Transverse colon (tissue), 4 donors: ENCODE measurements at regions of chr2 and their contacts with region 1.

Region 1: GRCh38 chr2:26970244-26970920 is at the start of gene MAPRE3:
- DNase-seq: peak; percentile 86
- H3K4me3 ChIP-seq: peak within 1 kb of the TSS; percentile 68 to 89 (median 78)
- H3K27ac ChIP-seq: peak within 1 kb of the TSS; percentile 73 to 86 (median 85)
- H3K4me1 ChIP-seq: peaks cover 5 to 45% (median 26%) of the 10 kb centered on the region in 4 donors
- H3K27me3 ChIP-seq: no peaks in the 10 kb centered on the region
- CTCF ChIP-seq: no peak
- EP300 ChIP-seq: no peak
- POLR2A ChIP-seq: no peak
- total RNA-seq, gene MAPRE3: 16.8 to 64.7 (median 32.9) TPM

Region 2: GRCh38 chr2:26692279-26692896 is 278.0 kb before region 1 on chr2 and contains the start of gene KCNK3:
- in situ Hi-C with region 1: no loop called
- intact Hi-C with region 1: no loop called
- DNase-seq: peak; percentile 43
- H3K4me3 ChIP-seq: peak within 1 kb of the TSS; percentile 3 to 45 (median 24)
- H3K27ac ChIP-seq: peak within 1 kb of the TSS; percentile 76 to 88 (median 76)
- H3K4me1 ChIP-seq: peaks cover 10 to 28% (median 18%) of the 10 kb centered on the region in 4 donors
- H3K27me3 ChIP-seq: peaks cover 59% of the 10 kb centered on the region
- CTCF ChIP-seq: no peak
- EP300 ChIP-seq: no peak
- POLR2A ChIP-seq: no peak
- total RNA-seq, gene KCNK3: 0.37 to 1.5 (median 0.82) TPM

Region 3: DNA sequence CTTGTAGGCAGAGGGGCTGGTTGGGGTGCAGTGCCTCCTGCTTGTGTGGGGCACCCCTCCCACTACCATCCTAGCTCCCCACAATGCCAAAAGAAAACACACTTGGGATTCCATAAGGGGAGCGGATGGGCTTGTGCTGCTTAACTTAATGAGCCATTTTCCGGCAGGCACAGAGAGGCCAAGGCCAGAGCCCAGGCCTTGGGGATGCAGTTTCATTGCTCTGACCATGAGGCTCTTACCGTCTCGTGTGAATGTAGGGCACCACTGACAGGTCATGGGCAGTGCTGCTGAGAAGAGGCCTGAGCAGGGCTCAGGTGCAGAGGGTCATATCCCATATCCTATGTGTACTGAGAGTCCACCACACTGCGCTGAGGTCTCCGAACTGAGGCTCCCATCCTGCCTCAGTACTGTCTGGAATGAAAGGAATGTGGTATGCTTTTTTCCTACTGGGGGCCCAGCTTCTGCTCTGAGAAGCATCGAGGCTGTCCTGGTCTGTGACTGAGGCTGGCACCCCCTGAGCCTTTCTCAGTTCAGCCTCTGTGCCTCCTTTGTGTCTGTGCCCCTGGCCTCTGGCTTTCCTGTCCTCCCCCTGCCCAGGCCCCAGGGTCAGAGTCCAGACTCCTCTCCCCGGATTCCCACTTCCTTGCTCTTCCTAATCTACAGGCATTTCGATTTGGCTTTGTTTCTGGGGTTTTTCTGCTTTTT is 45.1 kb before region 1 on chr2:
- in situ Hi-C with region 1: no loop called
- intact Hi-C with region 1: no loop called
- DNase-seq: no peak
- H3K4me3 ChIP-seq: no peak overlapping the region
- H3K27ac ChIP-seq: no peak overlapping the region
- H3K4me1 ChIP-seq: no peaks in the 10 kb centered on the region
- H3K27me3 ChIP-seq: peaks cover 17% of the 10 kb centered on the region
- CTCF ChIP-seq: no peak
- EP300 ChIP-seq: no peak
- POLR2A ChIP-seq: no peak

Region 4: DNA sequence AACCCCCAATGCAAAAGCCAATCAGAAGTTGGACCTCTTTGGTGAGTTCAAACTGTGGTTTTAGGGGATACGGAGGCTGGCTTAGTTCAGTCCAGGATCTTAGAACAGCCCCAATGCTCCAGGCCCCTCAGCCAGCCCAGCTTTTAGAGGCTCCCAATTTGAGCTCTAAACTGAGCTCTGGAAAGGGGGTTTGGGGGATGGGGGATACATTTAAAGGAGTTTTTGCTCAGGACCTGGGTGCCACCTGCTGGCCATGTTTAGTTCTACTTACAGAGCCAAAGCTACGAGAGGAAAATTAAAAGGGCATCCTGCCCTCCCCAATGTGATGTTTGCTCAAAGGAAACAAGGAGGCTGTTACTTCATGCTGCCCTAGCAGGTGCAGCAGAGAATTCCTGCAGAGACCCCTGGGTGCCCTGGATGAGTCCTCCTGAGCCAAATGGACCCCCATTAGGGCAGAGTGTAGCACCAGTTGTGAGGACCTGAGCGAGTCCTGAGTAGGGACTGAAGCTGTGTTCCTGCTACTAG is 46.5 kb after region 1 on chr2:
- in situ Hi-C with region 1: loop called (anchors 5 to 10 kb)
- intact Hi-C with region 1: no loop called
- DNase-seq: peak; percentile 66
- H3K4me3 ChIP-seq: no peak overlapping the region
- H3K27ac ChIP-seq: peak overlapping the region in 3 of 4 donors; percentile 55 to 73 (median 60)
- H3K4me1 ChIP-seq: peaks cover 19 to 46% (median 41%) of the 10 kb centered on the region in 4 donors
- H3K27me3 ChIP-seq: no peaks in the 10 kb centered on the region
- CTCF ChIP-seq: peak; percentile 63 to 81 (median 66)
- EP300 ChIP-seq: no peak
- POLR2A ChIP-seq: no peak

Region 5: GRCh38 chr2:27086090-27086723 is 115.8 kb after region 1 on chr2:
- in situ Hi-C with region 1: loop called (anchors 10 to 25 kb)
- intact Hi-C with region 1: no loop called
- DNase-seq: peak; percentile 97
- H3K4me3 ChIP-seq: peak overlapping the region; percentile 35 to 72 (median 52)
- H3K27ac ChIP-seq: peak overlapping the region; percentile 92 to 94 (median 92)
- H3K4me1 ChIP-seq: peaks cover 25 to 51% (median 35%) of the 10 kb centered on the region in 4 donors
- H3K27me3 ChIP-seq: no peaks in the 10 kb centered on the region
- CTCF ChIP-seq: peak; percentile 52 to 95 (median 89)
- EP300 ChIP-seq: no peak
- POLR2A ChIP-seq: peak; percentile 75

Region 6: DNA sequence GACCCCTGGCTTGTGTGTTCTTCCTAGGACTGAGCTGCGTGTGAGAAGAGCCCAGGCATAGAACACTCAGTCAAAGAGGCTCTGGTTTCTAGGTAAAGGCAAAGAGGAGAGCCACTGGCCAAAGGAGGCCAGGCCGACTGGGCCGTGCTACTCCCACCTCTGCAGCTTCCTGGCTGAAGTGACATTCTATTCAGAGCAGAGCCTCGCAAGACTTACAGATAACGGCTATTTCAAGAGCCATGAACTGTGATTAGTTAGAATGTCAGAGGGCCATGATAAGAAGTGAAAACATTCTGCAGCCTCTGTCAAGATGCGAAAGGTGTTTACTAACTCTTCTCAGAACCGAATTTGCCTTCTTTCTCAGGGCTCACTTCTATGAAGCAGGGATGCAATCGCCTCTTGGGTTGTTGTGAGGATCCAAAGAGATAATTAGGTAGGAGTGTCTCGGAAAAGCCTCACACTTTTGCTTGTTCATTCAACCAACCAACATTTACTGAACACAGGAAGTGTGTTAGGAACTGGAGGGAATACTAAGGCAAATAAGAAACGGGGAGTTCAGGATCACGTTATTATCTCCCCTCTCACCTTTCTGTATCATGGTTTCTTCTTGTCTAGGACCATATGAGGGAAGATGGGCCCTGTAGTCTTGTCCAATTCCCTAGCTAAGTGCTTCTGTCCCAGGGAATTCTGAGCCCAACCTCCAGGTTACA is 301.4 kb after region 1 on chr2:
- in situ Hi-C with region 1: loop called (anchors 10 to 25 kb)
- intact Hi-C with region 1: no loop called
- DNase-seq: no peak
- H3K4me3 ChIP-seq: no peak overlapping the region
- H3K27ac ChIP-seq: no peak overlapping the region
- H3K4me1 ChIP-seq: no peaks in the 10 kb centered on the region
- H3K27me3 ChIP-seq: peaks cover 71% of the 10 kb centered on the region
- CTCF ChIP-seq: no peak
- EP300 ChIP-seq: no peak
- POLR2A ChIP-seq: no peak

Region 7: DNA sequence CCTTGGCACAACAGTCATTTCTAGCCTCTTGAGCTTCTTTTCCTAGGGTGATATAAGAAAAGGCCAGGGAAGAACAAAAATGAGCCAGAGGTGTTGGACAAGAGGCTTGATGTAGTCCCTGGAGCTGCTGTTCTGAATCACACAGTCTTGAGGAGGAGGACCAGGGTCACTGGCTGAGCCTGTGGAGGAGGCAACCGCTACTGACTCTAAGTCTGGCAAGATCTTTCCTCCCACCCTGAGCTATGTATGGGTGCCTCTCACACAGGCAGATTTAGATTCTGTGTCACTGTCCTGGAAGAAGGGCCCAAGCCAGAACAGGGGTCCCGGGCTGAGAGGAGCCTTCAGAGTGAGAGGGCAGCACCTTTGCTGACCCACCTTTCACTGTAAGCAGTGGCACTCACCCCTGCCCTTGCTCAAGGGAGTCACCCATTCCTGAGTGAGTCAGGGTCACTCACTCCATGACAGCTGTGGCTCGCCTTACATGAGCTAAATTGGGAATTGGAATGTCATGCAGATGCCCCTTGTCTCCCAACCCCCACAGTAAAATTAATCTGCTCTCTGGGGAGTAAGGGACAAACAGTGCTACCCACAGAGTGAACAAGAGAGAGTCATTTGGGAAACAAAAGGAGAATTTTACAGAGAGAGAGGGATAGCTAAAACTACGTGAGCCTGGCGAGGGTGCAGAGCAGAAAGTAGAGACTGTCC is 311.6 kb after region 1 on chr2 and contains the start of gene TRIM54:
- in situ Hi-C with region 1: loop called (anchors 10 to 25 kb)
- intact Hi-C with region 1: loop called (anchors 10 kb)
- DNase-seq: no peak
- H3K4me3 ChIP-seq: no peak within 1 kb of the TSS
- H3K27ac ChIP-seq: no peak within 1 kb of the TSS
- H3K4me1 ChIP-seq: no peaks in the 10 kb centered on the region
- H3K27me3 ChIP-seq: peaks cover 45% of the 10 kb centered on the region
- CTCF ChIP-seq: no peak
- EP300 ChIP-seq: no peak
- POLR2A ChIP-seq: no peak
- total RNA-seq, gene TRIM54: 0.40 to 1.9 (median 1.2) TPM in 3 of 4 donors, not detected in the other

Region 8: GRCh38 chr2:27291865-27292264 is 321.5 kb after region 1 on chr2:
- in situ Hi-C with region 1: loop called in 3 of 4 experiments (anchors 25 kb)
- intact Hi-C with region 1: loop called (anchors 10 kb)
- DNase-seq: no peak
- H3K4me3 ChIP-seq: no peak overlapping the region
- H3K27ac ChIP-seq: no peak overlapping the region
- H3K4me1 ChIP-seq: no peaks in the 10 kb centered on the region
- H3K27me3 ChIP-seq: peaks cover 41% of the 10 kb centered on the region
- CTCF ChIP-seq: no peak
- EP300 ChIP-seq: no peak
- POLR2A ChIP-seq: no peak